ENCODE measurements at regions of chr2 and their contacts with region 1.

Region 1: DNA sequence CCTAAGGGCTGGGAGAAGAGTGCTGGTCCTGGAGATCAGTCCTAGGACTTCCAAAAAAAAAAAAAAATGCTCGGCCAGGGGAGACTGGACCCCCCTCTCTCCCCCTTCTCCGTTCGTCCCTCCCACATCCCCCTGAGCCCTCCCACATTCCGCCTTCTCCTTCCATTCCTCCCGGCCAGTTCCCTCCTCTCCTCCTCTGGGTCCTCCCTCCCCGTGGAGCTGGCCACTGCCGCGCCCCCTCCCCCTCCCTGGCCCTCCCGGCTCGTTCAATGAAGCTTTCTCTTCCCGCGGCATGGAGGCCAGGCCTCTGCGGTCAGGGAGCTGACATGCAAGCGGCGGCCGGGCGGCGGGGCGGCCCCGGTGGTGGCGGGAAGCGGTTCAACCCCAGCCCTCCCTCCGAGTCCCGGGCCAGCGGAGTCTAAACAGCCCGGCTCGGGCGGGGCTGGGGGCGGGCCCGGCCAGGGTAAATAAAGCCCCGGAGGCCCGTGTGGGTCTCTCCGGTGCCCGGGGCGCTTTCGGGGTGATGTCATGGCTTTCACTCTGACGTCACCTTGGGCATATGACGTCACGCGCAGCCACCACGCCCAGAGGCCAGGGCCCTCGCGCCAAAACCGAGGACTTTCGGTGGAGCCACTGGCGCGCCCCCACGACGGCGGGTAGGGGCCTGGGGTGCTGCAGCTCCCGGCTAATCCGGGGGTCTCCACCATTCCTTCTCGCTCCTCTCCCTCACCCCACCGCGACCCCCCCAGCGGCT is at the start of gene LOXL3:
- DNase-seq: peak; percentile 80
- H3K4me3 Mint-ChIP-seq: peak within 1 kb of the TSS; percentile 97
- H3K27ac Mint-ChIP-seq: peak within 1 kb of the TSS; percentile 96
- H3K4me1 Mint-ChIP-seq: peaks cover 32% of the 10 kb centered on the region
- H3K27me3 Mint-ChIP-seq: no peaks in the 10 kb centered on the region
- total RNA-seq, gene LOXL3: 1.7 and 2.1 TPM in 2 replicates

Region 2: DNA sequence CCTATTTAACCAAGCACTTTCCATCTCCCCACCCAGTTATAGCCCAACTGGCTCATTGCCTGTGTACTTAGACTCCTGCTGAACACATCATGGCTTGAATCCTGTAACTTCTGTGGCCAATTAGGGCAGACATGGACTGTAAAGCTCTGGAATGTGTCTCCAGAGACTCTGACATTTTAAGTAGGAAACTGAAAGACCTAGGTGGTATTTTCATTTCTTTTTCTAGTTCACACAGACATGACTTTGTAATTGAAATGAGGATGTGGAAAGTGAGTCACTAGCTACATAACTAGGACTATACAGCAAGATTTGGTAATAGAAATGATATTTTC is 12.7 kb after region 1 on chr2:
- intact Hi-C with region 1: loop called (anchors 1 kb)
- DNase-seq: no peak
- H3K4me3 Mint-ChIP-seq: peak overlapping the region; percentile 28
- H3K27ac Mint-ChIP-seq: peak overlapping the region; percentile 76
- H3K4me1 Mint-ChIP-seq: peaks cover 50% of the 10 kb centered on the region
- H3K27me3 Mint-ChIP-seq: no peaks in the 10 kb centered on the region

Region 3: DNA sequence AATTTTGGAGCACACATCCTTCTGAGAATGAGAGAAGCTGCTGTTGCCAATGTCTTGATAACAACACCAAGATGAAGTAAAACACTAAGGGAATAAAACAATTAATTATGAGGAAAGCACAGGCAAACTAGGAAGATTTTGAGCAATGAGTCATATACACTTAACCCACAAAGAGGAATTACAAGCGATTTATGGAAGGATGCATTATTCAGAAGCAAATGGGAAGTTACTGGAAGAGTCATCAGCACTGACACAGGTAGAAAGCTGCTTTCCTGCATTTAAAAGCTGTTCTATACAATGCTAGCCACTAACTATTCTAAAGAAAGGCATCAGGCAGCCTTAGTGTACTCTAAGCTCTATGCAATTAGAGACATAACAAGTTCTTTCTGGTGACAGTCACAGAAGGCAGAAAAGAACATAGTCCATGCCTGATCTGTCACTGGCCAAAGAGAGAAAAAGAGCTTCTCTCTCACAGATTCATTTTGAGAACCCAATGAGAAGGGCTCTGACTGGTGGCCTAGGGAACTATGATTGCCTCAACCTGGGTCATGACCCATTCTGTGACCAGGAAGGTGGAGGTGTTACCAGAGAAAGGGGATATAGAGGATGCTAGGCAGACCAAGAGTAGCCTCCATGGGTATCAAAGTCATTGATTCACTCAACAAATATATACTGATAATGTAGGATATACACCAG is 48.7 kb after region 1 on chr2:
- intact Hi-C with region 1: no loop called
- DNase-seq: no peak
- H3K4me3 Mint-ChIP-seq: no peak overlapping the region
- H3K27ac Mint-ChIP-seq: no peak overlapping the region
- H3K4me1 Mint-ChIP-seq: peaks cover 15% of the 10 kb centered on the region
- H3K27me3 Mint-ChIP-seq: peaks cover 40% of the 10 kb centered on the region

Measured in activated T-helper 2 cell treated with anti-CD3 and anti-CD28 coated beads, Interferon-gamma antibody, Interleukin-2, Interleukin-4, amounts not matched to agents 10 μg/mL and 5 μg/mL and 100 μg/mL, durations not matched to agents 14 hours and 24 hours and 36 hours (primary cell).